Thyroid gland (tissue), 4 donors: ENCODE measurements at regions of chr20 and their contacts with region 1.

Region 1: DNA sequence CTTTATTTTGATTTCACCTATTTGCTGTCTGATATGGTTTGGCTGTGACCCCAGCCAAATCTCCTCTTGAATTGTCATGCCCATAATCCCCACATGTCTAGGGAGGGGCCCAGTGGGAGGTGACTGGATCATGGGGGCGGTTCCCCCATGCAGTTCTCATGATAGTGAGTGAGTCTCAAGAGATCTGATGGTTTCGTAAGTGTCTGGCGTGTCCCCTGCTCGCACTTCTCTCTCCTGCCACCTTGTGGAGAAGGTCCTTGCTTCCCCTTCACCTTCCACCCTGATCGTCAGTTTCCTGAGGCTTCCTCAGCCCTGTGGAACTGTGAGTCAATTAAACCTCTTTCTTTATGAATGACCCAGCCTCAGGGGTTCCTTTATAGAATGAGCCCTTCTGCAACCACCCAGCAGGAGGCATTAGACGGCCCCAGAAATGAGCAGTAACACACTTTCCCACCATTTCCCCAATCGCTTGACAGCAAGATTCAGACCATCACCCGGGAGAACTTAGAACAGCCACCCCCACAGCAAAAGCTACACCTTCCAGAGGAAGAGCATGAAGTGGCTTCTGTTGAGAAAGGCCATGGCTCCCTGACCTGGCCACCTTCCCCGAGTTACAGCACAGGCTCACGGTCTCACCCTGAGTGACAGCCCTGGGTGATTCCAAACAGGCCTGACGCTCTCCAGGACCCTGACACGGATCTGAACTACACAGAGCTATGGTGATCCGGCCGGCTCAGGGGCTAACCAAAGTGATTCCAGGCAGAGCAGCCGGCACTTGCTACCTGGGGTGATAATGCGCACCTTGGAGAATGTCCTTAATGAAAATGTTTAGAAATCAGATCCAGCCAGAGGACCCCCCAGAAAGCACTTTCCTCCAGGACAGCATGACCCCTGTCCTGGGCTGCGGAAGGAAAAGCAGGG is 131.2 kb upstream of the CDH4 start:
- DNase-seq: peak; percentile 74 to 77
- H3K4me3 ChIP-seq: no peak overlapping the region
- H3K27ac ChIP-seq: no peak overlapping the region
- H3K4me1 ChIP-seq: no peaks in the 10 kb centered on the region
- H3K27me3 ChIP-seq: no peaks in the 10 kb centered on the region
- CTCF ChIP-seq: peak in 5 of 6 experiments; percentile 43 to 85 (median 65)
- POLR2A ChIP-seq: no peak

Region 2: DNA sequence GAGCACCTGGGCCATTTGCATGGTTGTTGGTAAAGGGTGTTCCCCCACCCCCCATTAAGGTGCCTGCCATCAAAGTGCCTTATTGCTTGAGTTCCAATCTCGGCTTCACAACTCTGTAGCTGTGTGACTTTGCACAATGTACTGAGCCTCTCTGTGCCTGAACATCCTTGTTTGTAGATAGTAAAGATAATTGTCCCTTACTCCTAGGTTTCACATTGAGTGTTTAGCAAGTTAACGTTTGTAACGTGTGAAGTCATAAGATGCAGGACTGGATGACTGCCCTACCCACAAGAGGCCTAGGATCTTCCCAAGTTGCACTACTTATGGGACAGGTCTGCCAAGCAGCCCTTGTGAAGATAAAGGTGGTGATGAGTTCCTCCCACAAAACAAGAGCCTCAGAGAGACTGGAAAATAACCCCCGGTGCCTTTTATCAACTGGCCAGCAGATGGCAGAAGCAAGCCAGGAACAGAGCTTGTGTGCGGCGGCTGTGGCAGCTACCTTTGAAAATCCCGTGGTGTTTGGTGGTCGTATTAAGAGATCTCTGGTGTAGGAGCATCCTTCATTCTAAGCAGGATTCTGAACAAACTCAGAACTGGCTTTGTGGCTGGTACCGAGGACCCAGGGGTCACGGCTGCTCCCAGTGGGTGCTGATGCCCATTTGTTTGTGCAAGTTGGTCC is 1063.6 kb before region 1 on chr20:
- intact Hi-C with region 1: loop called (anchors 10 kb)
- DNase-seq: peak; percentile 57 to 58
- H3K4me3 ChIP-seq: no peak overlapping the region
- H3K27ac ChIP-seq: no peak overlapping the region
- H3K4me1 ChIP-seq: peaks cover 0 to 14% of the 10 kb centered on the region in 2 donors
- H3K27me3 ChIP-seq: no peaks in the 10 kb centered on the region
- CTCF ChIP-seq: peak; percentile 46 to 84 (median 65)
- POLR2A ChIP-seq: no peak

Region 3: DNA sequence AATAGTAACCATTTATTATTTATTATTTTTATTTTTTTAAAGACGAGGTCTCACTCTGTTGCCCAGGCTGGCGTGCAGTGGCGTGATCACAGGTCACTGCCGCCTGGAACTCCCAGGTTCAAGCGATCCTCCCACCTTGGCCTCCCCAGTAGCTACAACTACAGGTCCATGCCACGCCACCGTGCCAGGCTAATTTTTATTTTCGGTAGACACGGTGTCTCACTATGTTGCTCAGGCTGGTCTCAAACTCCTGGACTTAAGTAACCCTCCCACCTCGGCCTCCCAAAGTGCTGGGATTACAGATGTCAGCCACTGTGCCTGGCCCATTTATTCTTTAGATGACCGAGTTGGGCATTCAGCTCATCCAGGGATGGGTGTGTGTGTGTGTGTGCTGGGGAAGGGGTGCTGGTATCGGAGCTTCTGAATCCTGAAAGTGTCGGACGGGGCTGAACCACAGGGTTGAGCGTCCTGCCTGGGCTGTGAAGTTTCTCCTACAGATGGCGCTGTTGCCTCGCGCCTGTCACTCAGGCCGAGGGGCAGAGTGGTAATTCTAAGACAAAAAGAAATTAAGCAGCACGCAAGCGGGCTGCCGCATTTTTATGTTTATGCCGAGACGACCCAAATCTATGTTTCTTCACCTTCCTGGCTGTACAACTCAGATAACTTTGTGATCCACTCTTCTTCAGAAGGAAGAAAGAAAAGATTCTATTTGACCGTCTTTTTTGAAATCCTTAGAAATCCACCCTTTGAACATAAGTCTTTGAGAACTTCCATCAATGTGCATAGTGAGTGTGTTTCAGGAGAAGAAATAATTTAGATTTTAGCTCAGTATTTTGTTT is 909.9 kb before region 1 on chr20:
- intact Hi-C with region 1: loop called (anchors 5 kb)
- DNase-seq: peak; percentile 73 to 79
- H3K4me3 ChIP-seq: no peak overlapping the region
- H3K27ac ChIP-seq: no peak overlapping the region
- H3K4me1 ChIP-seq: peaks cover 0 to 7% of the 10 kb centered on the region in 2 donors
- H3K27me3 ChIP-seq: no peaks in the 10 kb centered on the region
- CTCF ChIP-seq: peak; percentile 62 to 93 (median 90)
- POLR2A ChIP-seq: no peak

Region 4: GRCh38 chr20:60851826-60852704 is 268.8 kb before region 1 on chr20:
- intact Hi-C with region 1: no loop called
- DNase-seq: peak; percentile 34 to 43
- H3K4me3 ChIP-seq: no peak overlapping the region
- H3K27ac ChIP-seq: no peak overlapping the region
- H3K4me1 ChIP-seq: no peaks in the 10 kb centered on the region
- H3K27me3 ChIP-seq: no peaks in the 10 kb centered on the region
- CTCF ChIP-seq: peak in 5 of 6 experiments; percentile 13 to 70 (median 35)
- POLR2A ChIP-seq: no peak

Region 5: DNA sequence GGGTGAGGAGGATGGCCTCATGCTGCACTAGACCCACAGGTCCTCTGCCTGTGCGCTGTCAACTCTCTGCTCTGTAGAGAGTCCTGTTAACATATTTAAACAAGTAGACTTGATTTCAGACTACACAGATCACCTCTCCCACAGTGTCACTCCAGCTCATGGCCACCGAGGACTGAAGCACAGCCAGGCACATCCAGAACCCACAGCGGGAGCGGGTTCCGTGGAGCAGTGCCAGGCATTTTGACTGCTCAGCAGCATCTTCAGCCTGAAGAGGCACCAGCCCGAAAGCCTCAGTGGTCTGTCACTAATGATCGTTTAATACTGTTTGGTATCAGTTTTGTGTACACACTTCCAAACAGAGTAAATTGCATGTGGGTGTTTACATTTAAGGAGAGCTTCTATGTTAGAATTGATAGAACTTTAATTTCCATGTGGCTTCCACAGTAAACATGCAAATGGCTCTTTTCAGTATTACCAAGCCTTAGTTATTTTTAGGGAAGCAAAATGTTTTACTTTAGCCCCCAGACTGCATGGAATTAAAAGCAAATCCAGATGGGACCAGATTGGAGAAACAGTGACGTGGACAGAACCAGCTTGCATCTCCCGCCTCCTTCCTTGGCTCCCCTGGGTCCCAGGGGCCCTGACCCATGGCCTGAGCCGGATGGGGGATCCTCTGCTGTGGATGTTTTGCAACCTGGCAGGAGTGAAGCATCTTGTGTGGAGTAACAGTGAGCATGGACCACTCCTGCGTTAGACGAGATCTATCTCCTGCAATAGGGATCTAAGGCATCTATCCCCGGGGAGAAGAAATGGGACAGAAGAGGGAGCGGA is 65.5 kb before region 1 on chr20:
- intact Hi-C with region 1: no loop called
- DNase-seq: no peak
- H3K4me3 ChIP-seq: no peak overlapping the region
- H3K27ac ChIP-seq: no peak overlapping the region
- H3K4me1 ChIP-seq: no peaks in the 10 kb centered on the region
- H3K27me3 ChIP-seq: no peaks in the 10 kb centered on the region
- CTCF ChIP-seq: no peak
- POLR2A ChIP-seq: no peak

Region 6: GRCh38 chr20:61185841-61186601 is 65.2 kb after region 1 on chr20:
- intact Hi-C with region 1: no loop called
- DNase-seq: no peak
- H3K4me3 ChIP-seq: no peak overlapping the region
- H3K27ac ChIP-seq: no peak overlapping the region
- H3K4me1 ChIP-seq: no peaks in the 10 kb centered on the region
- H3K27me3 ChIP-seq: no peaks in the 10 kb centered on the region
- CTCF ChIP-seq: no peak
- POLR2A ChIP-seq: no peak